Activated B cell treated with CpG ODN at 0.5 μM for 24 hours (primary cell): ENCODE measurements at regions of chr16 and their contacts with region 1.

Region 1: DNA sequence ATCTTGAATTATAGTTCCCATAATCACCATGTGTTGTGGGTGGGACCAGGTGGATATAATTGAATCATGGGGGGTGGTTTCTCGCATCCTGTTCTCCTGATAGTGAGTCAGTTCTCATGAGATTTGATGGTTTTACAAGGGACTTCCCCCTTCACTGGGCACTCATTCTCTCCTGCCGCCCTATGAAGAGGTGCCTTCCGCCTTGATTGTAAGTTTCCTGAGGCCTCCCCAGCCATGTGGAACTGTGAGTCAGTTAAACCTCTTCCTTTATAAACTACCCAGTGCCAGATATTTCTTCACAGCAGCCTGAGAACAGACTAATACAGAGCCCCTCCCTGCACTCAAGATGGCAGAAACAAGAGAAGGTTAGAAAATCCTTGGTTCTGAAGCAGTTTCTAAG is 26.4 kb downstream of the LDAF1 start:
- DNase-seq: no peak
- ATAC-seq: peak; percentile 65
- H3K4me3 Mint-ChIP-seq: no peak overlapping the region
- H3K27ac Mint-ChIP-seq: peak overlapping the region; percentile 85
- H3K4me1 Mint-ChIP-seq: peaks cover 21% of the 10 kb centered on the region
- H3K27me3 Mint-ChIP-seq: peaks cover 2% of the 10 kb centered on the region
- CTCF ChIP-seq: no peak

Region 2: DNA sequence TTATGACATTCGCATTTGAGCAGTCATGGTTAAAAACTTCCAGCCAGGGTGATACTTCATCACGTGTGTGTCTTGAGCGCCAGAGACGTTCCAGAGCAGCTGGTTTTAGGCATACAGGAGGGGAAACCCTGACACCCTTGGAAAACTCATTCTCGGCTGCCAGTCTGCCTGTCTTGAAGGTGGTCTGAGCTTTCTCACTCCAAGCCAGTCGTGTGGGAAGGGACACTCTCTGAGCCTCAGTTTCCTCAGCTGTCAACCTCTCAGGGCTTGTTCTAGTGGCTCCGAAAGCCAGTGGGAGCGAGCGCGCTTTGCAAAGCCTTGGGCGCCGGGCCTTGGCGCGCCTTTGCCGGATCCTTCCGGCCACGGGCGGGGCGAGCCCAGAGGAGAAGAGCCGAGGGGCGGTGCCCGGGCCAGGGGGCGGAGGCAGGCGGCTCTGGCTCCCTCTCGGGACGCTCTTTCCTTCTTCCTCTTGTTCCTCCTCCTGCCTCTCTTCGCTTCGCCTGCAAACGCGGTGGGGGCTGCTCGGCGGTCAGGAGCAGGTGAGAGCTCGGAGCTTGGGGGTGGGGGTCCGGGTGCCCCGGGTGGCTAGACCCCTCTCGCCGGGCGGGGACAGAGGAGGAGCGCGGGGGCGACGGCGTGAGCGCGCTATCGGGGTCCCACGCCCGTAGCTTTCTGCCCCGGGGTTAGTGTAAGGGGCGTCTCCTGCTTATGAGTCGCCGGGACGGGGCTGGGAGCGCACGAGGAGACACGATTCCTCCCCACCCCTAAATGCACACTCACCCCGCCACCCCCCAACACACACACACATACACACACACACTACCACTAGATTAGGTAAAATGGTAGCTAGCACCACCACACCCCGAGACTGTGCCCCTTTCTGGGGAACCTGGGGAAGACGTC is 26.4 kb before region 1 on chr16 and contains the start of gene LDAF1:
- CTCF ChIA-PET with region 1: interaction called, 5 read pairs
- POLR2A ChIA-PET with region 1: interaction called, 5 read pairs
- intact Hi-C with region 1: loop called (anchors 1 kb)
- DNase-seq: peak; percentile 81
- ATAC-seq: peak; percentile 93
- H3K4me3 Mint-ChIP-seq: peak within 1 kb of the TSS; percentile 92
- H3K27ac Mint-ChIP-seq: peak within 1 kb of the TSS; percentile 79
- H3K4me1 Mint-ChIP-seq: peaks cover 20% of the 10 kb centered on the region
- H3K27me3 Mint-ChIP-seq: no peaks in the 10 kb centered on the region
- CTCF ChIP-seq: no peak
- total RNA-seq, gene LDAF1: 16.5 and 17.2 TPM in 2 replicates

Region 3: DNA sequence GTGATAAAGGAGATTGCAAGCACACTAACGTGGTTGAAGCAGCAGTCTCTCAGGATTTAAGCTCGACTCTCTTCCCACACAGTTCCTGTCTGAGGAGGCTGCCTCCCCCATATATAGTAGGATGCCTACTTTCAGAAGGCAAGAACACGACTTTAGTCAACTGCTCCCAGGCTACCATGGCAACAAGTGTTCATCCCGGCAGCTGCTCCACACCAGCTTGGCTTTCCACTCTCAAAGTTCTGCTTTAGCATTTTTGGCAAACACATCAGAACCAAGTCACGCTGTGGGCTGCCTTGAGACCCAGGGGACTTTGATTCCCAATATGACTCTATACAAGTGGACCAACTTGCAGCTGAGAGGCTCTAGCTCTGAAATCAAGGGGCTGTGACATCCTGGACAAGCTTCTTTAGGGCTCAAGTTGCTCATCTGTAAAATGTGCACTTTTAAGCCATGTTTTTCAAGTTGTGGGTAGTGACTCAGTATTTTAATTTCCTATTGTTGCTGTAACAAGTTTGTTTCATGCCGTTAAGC is 10.0 kb after region 1 on chr16:
- CTCF ChIA-PET with region 1: no interaction called
- POLR2A ChIA-PET with region 1: interaction called, 18 read pairs
- intact Hi-C with region 1: no loop called
- DNase-seq: no peak
- ATAC-seq: peak; percentile 50
- H3K4me3 Mint-ChIP-seq: no peak overlapping the region
- H3K27ac Mint-ChIP-seq: no peak overlapping the region
- H3K4me1 Mint-ChIP-seq: peaks cover 16% of the 10 kb centered on the region
- H3K27me3 Mint-ChIP-seq: peaks cover 23% of the 10 kb centered on the region
- CTCF ChIP-seq: no peak

Region 4: GRCh38 chr16:21300309-21301167 is 115.7 kb after region 1 on chr16:
- CTCF ChIA-PET with region 1: interaction called, 22 read pairs
- POLR2A ChIA-PET with region 1: interaction called, 10 read pairs
- intact Hi-C with region 1: loop called (anchors 1 kb)
- DNase-seq: peak; percentile 43
- ATAC-seq: peak; percentile 43
- H3K4me3 Mint-ChIP-seq: peak overlapping the region; percentile 97
- H3K27ac Mint-ChIP-seq: peak overlapping the region; percentile 88
- H3K4me1 Mint-ChIP-seq: peaks cover 30% of the 10 kb centered on the region
- H3K27me3 Mint-ChIP-seq: peaks cover 3% of the 10 kb centered on the region
- CTCF ChIP-seq: no peak